ENCODE measurements at regions of chrX and their contacts with region 1.

Region 1: DNA sequence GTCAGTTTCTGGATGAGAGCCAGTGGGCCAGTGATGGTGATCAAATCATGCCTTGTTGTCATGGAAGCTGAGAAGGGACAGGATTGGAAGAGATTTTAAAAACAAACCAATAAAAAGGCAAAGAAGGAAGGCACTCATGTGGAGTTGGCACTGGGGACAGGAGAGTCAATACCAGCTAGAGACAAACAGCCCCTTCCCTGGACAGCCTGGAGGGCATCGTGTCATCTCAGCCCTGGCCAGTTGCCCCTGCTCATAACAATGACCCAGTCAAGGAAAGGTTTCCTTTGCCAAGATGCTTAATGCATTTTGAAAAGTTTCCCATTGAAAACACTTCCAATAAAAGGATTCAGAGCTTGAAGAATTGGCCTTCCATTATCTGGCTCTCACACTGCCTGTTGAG is 55.5 kb downstream of the SCML1 start:
- DNase-seq: no peak

Region 2: DNA sequence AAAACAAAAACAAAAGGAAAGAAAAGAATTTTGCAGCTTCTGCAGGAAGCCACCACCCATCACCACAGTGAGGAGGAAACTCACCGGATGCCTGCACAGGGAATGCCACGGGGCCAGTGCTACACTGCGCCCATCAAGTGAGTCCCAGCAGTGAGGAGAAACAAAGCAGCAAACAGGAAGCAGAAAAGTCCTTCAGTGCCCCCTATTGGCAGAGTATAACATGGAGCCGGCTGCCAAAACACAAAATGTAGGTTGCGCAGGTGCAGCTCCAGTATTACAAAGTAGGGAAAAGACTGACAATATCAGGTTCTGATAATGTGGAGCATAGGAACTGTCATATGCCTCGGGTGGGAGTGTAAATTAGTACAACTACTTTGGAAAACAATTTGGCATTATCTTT is 585.0 kb after region 1 on chrX:
- in situ Hi-C with region 1: loop called (anchors 10 kb)
- DNase-seq: peak; percentile 87

Measured in KBM-7 (cell line).